ENCODE measurements at regions of chr5 and their contacts with region 1.

Region 1: GRCh38 chr5:36690041-36690961 is 83.9 kb downstream of the SLC1A3 start:
- DNase-seq: peak; percentile 45 to 74
- ATAC-seq: peak; percentile 83 to 87 (median 85)
- H3K4me3 ChIP-seq: peak overlapping the region; percentile 62
- H3K4me3 Mint-ChIP-seq: peak overlapping the region; percentile 90
- H3K27ac ChIP-seq: no peak overlapping the region
- H3K27ac Mint-ChIP-seq: peak overlapping the region in 1 of 2 donors; percentile 13
- H3K4me1 ChIP-seq: peaks cover 20% of the 10 kb centered on the region
- H3K4me1 Mint-ChIP-seq: peaks cover 10 to 23% of the 10 kb centered on the region in 2 donors
- H3K27me3 ChIP-seq: peaks cover 4% of the 10 kb centered on the region
- H3K27me3 Mint-ChIP-seq: peaks cover 6 to 7% of the 10 kb centered on the region in 2 donors
- CTCF ChIP-seq: peak; percentile 71

Region 2: GRCh38 chr5:36269479-36270219 is 420.7 kb before region 1 on chr5:
- intact Hi-C with region 1: loop called (anchors 5 kb)
- DNase-seq: no peak
- ATAC-seq: no peak
- H3K4me3 ChIP-seq: no peak overlapping the region
- H3K4me3 Mint-ChIP-seq: no peak overlapping the region
- H3K27ac ChIP-seq: no peak overlapping the region
- H3K27ac Mint-ChIP-seq: no peak overlapping the region
- H3K4me1 ChIP-seq: no peaks in the 10 kb centered on the region
- H3K4me1 Mint-ChIP-seq: no peaks in the 10 kb centered on the region
- H3K27me3 ChIP-seq: no peaks in the 10 kb centered on the region
- H3K27me3 Mint-ChIP-seq: peaks cover 6 to 10% of the 10 kb centered on the region in 2 donors
- CTCF ChIP-seq: no peak

Region 3: DNA sequence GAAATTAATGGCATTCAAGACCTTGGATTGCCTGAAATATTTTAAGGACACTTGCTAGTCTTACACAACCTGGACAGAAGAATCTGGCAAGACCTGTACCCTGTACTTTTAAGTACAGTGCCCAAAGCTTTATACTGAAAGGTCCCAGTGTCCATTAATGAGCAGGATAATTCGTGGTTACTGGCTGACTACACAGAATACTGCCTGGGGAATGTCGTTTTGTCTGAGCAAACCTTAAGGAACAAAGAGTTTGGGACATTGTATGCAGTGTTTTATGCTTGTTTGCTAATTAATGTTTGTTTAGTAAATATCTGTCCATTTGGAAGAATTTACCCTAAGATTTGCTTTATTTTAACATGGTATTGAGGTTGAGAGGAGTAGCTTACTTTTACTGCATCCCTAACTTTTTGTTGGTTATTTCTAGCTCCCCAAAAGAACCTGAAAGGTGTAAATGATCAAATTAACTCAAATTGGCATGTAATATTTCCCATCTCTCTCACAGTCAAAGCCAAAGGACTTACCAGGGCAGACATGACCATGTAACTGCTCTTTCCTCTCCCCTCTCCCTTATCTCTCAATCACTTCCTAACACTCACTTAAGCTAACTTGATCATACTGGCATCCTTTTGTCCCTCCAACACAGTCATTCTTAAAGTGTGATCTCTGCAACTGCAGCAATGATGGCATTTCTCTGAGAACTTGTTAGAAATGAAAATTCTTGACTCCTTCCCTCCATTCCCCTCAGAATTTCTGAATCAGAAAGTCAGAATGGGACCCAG is 404.3 kb before region 1 on chr5:
- intact Hi-C with region 1: no loop called
- DNase-seq: no peak
- ATAC-seq: no peak
- H3K4me3 ChIP-seq: no peak overlapping the region
- H3K4me3 Mint-ChIP-seq: no peak overlapping the region
- H3K27ac ChIP-seq: no peak overlapping the region
- H3K27ac Mint-ChIP-seq: no peak overlapping the region
- H3K4me1 ChIP-seq: no peaks in the 10 kb centered on the region
- H3K4me1 Mint-ChIP-seq: no peaks in the 10 kb centered on the region
- H3K27me3 ChIP-seq: no peaks in the 10 kb centered on the region
- H3K27me3 Mint-ChIP-seq: peaks cover 8% of the 10 kb centered on the region in 2 donors
- CTCF ChIP-seq: no peak

Region 4: DNA sequence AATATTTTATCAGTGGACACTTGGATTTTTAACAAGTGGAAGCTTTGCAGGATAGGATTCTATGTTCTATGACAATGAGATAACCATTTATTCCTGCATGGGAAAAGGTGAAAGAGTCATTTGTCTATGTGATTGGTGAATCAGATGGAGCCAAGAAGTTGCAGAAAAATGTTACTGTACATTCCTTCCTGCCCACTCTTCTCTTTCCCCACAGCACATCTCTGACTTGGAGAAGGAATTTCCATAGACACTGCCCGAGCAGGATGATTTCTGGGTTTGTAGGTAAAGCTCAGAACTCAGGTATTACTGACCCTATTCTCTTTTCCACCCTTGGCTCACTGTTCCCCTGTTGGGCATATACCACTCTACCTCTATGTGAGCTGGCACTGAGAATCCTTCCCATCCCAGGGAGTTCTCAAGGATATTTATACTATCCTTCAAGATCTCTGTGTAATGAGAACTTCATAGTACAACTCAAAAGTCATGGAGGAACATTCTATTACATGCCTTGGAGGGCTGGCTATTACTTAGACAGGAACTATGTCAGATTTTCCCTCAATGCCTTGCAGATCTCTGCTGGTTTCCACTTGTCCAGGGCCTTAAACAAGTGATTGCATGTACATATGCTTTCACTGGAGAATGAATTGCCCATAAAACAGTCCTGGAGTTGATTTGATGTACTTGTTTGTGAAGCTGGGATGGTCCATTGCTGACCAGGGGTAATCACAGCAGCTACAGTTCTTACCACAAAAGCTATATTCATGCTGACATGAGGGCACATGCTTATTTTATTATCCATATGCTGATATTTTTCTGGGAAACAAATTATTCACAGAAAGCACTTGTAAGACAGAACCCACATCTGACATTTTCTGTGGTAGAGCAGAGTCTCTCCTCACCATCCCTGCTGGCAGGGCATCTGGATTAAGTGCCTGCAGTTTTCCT is 59.8 kb before region 1 on chr5:
- intact Hi-C with region 1: no loop called
- DNase-seq: no peak
- ATAC-seq: no peak
- H3K4me3 ChIP-seq: no peak overlapping the region
- H3K4me3 Mint-ChIP-seq: no peak overlapping the region
- H3K27ac ChIP-seq: no peak overlapping the region
- H3K27ac Mint-ChIP-seq: no peak overlapping the region
- H3K4me1 ChIP-seq: no peaks in the 10 kb centered on the region
- H3K4me1 Mint-ChIP-seq: peaks cover 10 to 13% of the 10 kb centered on the region in 2 donors
- H3K27me3 ChIP-seq: no peaks in the 10 kb centered on the region
- H3K27me3 Mint-ChIP-seq: peaks cover 14 to 31% of the 10 kb centered on the region in 2 donors
- CTCF ChIP-seq: no peak

Region 5: GRCh38 chr5:36657563-36657995 is 32.7 kb before region 1 on chr5:
- intact Hi-C with region 1: no loop called
- DNase-seq: peak in 1 of 2 donors; percentile 8
- ATAC-seq: peak in 2 of 3 donors; percentile 35 to 73
- H3K4me3 ChIP-seq: no peak overlapping the region
- H3K4me3 Mint-ChIP-seq: no peak overlapping the region
- H3K27ac ChIP-seq: no peak overlapping the region
- H3K27ac Mint-ChIP-seq: no peak overlapping the region
- H3K4me1 ChIP-seq: peaks cover 2% of the 10 kb centered on the region
- H3K4me1 Mint-ChIP-seq: no peaks in the 10 kb centered on the region
- H3K27me3 ChIP-seq: no peaks in the 10 kb centered on the region
- H3K27me3 Mint-ChIP-seq: peaks cover 10 to 19% of the 10 kb centered on the region in 2 donors
- CTCF ChIP-seq: no peak

Region 6: GRCh38 chr5:37005946-37006540 is 315.7 kb after region 1 on chr5:
- intact Hi-C with region 1: no loop called
- DNase-seq: peak in 1 of 2 donors; percentile 34
- ATAC-seq: peak in 1 of 3 donors; percentile 48
- H3K4me3 ChIP-seq: no peak overlapping the region
- H3K4me3 Mint-ChIP-seq: no peak overlapping the region
- H3K27ac ChIP-seq: no peak overlapping the region
- H3K27ac Mint-ChIP-seq: no peak overlapping the region
- H3K4me1 ChIP-seq: no peaks in the 10 kb centered on the region
- H3K4me1 Mint-ChIP-seq: peaks cover 0 to 7% of the 10 kb centered on the region in 2 donors
- H3K27me3 ChIP-seq: no peaks in the 10 kb centered on the region
- H3K27me3 Mint-ChIP-seq: no peaks in the 10 kb centered on the region
- CTCF ChIP-seq: peak; percentile 52